Lower leg skin (tissue), 4 donors: ENCODE measurements at regions of chr13 and their contacts with region 1.

Region 1: DNA sequence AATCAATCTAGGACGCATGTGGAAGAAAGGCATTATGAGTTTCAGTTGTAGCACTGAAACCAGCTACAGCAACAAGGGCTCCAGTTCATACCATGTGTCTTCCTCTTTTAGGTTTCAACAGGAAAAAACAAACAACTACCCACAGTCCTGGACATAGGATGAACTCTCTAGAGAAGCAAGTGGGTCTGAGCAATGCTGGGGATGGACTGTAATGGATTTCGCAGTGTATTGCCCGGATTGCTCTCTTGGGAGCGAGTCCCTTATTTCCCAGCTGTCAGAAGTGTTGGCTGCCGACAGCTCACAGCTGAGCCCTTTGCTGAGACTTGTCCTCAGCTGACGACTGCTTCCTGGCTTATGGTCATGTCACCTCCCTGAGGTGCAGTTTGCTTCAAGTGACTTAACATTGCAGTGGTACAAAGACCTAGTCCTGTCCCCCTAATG is 12.1 kb upstream of the MYCBP2 start:
- DNase-seq: no peak
- H3K4me3 ChIP-seq: no peak overlapping the region
- CTCF ChIP-seq: no peak
- POLR2A ChIP-seq: no peak

Region 2: DNA sequence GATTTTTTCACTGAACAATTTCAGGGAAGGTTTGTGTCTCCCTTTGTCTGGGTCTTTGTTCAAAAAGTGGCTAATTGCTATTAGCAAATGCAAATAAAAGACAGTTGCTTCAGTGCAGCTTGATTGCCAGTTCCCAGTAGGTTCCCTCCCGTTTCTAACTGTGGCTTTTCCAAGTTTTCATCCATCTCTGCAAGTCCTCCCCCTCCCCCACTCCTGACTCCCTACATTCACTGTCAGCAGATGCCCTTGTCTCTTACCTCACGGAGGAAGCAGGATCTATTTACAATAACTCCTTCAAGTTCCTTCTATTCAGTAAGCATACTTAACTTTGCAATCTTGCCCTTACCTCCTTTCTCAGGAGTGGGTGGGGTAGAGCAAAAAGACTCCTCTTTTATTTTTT is 141.1 kb after region 1 on chr13:
- intact Hi-C with region 1: loop called (anchors 10 kb)
- DNase-seq: no peak
- H3K4me3 ChIP-seq: no peak overlapping the region
- CTCF ChIP-seq: no peak
- POLR2A ChIP-seq: no peak